ENCODE measurements at regions of chr16 and their contacts with region 1.

Region 1: DNA sequence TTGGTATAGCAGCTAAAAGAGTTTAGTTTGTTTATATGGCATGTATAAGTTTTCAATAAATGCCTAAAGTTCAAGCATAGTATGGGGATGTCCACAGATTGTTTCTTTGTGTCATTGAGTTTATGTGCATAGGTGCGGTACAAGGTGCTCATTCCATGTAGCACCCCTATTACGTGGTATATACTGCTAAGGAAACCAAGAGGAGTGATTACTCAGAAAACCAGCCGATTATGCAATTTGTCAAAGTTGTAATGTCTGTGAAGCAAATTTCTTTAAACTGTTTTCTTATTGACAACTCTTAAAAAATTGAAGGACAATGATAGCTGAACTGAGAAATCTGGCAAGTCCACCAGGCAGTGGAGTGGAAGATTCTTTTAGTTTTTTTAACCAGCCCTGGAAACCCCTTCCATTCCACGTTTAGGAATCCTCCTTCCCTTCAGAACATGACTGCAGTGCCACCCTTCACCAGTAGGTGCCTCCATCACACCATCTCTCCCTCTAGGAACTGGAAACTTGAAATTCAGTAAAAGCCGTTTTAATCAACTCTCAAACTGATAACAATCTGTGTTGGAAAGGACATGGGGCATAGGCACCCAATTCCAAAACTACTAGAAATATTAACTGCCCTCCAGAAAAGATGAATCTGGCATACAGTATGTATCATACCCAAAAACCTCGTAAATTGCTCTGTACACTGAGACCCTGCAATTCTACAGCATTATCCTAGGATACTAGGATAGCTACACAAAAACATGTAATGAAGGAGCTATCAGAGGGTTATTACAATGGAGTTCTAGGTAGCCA is 43.5 kb downstream of the REXO5 start:
- DNase-seq: peak; percentile 40 to 58 (median 56)
- H3K4me3 ChIP-seq: no peak overlapping the region
- H3K4me3 Mint-ChIP-seq: no peak overlapping the region
- H3K27ac ChIP-seq: no peak overlapping the region
- H3K27ac Mint-ChIP-seq: peak overlapping the region in 2 of 7 donors; percentile 35 to 48
- H3K4me1 ChIP-seq: peaks cover 11% of the 10 kb centered on the region
- H3K4me1 Mint-ChIP-seq: peaks cover 9 to 17% (median 11%) of the 10 kb centered on the region in 4 donors
- H3K27me3 ChIP-seq: no peaks in the 10 kb centered on the region
- H3K27me3 Mint-ChIP-seq: no peaks in the 10 kb centered on the region

Region 2: GRCh38 chr16:20430948-20431347 is 418.8 kb before region 1 on chr16:
- CTCF ChIA-PET with region 1: no interaction called
- POLR2A ChIA-PET with region 1: no interaction called
- intact Hi-C with region 1: no loop called
- DNase-seq: no peak
- H3K4me3 ChIP-seq: no peak overlapping the region
- H3K4me3 Mint-ChIP-seq: no peak overlapping the region
- H3K27ac ChIP-seq: no peak overlapping the region
- H3K27ac Mint-ChIP-seq: no peak overlapping the region
- H3K4me1 ChIP-seq: no peaks in the 10 kb centered on the region
- H3K4me1 Mint-ChIP-seq: no peaks in the 10 kb centered on the region
- H3K27me3 ChIP-seq: no peaks in the 10 kb centered on the region
- H3K27me3 Mint-ChIP-seq: peaks cover 0 to 3% of the 10 kb centered on the region in 2 donors

Region 3: DNA sequence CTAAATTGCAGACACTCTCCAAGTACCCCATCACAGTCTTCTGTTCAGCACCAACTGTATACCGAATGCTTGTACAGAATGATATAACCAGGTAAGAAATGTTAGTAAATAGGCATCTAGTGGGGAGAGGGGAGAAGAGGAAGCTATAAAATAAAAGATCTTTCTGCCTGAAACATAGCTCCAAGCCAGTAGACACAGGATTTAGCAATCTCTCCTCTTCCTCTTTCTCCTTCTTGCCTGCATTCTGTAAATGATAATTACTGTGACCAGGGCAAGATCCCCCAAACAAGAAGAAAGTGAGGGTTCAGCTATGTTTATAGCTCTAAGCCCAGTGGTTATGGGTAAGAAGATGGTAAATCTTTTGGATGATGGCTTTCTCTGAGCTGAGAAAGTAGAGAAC is 68.1 kb before region 1 on chr16:
- CTCF ChIA-PET with region 1: no interaction called
- POLR2A ChIA-PET with region 1: no interaction called
- intact Hi-C with region 1: no loop called
- DNase-seq: no peak
- H3K4me3 ChIP-seq: no peak overlapping the region
- H3K4me3 Mint-ChIP-seq: no peak overlapping the region
- H3K27ac ChIP-seq: no peak overlapping the region
- H3K27ac Mint-ChIP-seq: no peak overlapping the region
- H3K4me1 ChIP-seq: no peaks in the 10 kb centered on the region
- H3K4me1 Mint-ChIP-seq: no peaks in the 10 kb centered on the region
- H3K27me3 ChIP-seq: no peaks in the 10 kb centered on the region
- H3K27me3 Mint-ChIP-seq: no peaks in the 10 kb centered on the region

Region 4: GRCh38 chr16:20866145-20866772 is 16.5 kb after region 1 on chr16:
- CTCF ChIA-PET with region 1: interaction called, 113 read pairs
- POLR2A ChIA-PET with region 1: no interaction called
- intact Hi-C with region 1: no loop called
- DNase-seq: no peak
- H3K4me3 ChIP-seq: no peak overlapping the region
- H3K4me3 Mint-ChIP-seq: no peak overlapping the region
- H3K27ac ChIP-seq: no peak overlapping the region
- H3K27ac Mint-ChIP-seq: no peak overlapping the region
- H3K4me1 ChIP-seq: peaks cover 7% of the 10 kb centered on the region
- H3K4me1 Mint-ChIP-seq: peaks cover 10 to 17% (median 12%) of the 10 kb centered on the region in 4 donors
- H3K27me3 ChIP-seq: no peaks in the 10 kb centered on the region
- H3K27me3 Mint-ChIP-seq: no peaks in the 10 kb centered on the region

Region 5: DNA sequence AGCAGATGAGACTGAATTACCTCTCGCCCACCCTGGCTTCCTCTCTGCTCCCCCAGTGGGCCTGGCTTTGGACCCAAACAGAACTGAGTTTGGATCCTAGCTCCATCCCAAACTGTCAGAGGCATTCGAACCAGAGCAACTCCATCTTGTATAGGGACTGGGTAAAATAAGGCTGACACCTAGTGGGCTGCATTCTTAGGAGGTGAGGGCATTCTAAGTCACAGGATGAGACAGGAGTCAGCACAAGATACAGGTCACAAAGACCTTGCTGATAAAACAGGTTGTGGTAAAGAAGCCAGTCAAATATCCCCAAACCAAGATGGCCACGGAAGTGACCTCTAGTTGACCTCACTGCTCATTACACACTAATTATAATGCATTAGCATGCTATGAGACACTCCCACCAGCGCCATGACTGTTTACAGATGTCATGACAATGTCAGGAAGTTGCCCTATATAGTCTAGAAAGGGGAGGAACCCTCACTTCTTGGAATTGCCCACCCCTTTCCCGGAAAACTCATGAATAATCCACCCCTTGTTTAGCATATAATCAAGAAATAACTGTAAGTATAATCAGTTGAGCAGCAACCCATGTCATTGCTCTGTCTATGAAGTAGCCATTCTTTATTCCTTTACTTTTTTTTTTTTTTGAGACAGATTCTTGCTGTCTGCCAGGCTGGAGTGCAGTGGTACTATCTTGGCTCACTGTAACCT is 95.2 kb after region 1 on chr16:
- CTCF ChIA-PET with region 1: interaction called, 4 read pairs
- POLR2A ChIA-PET with region 1: no interaction called
- intact Hi-C with region 1: loop called (anchors 1 kb)
- DNase-seq: peak; percentile 7 to 64 (median 23)
- H3K4me3 ChIP-seq: no peak overlapping the region
- H3K4me3 Mint-ChIP-seq: no peak overlapping the region
- H3K27ac ChIP-seq: no peak overlapping the region
- H3K27ac Mint-ChIP-seq: peak overlapping the region in 1 of 7 donors; percentile 13
- H3K4me1 ChIP-seq: peaks cover 7% of the 10 kb centered on the region
- H3K4me1 Mint-ChIP-seq: peaks cover 4 to 19% (median 10%) of the 10 kb centered on the region in 4 donors
- H3K27me3 ChIP-seq: no peaks in the 10 kb centered on the region
- H3K27me3 Mint-ChIP-seq: peaks cover 0 to 1% of the 10 kb centered on the region in 2 donors

Region 6: GRCh38 chr16:21083729-21084268 is 234.0 kb after region 1 on chr16:
- CTCF ChIA-PET with region 1: interaction called, 60 read pairs
- POLR2A ChIA-PET with region 1: no interaction called
- intact Hi-C with region 1: loop called (anchors 1 kb)
- DNase-seq: peak in 4 of 5 donors; percentile 7 to 30 (median 24)
- H3K4me3 ChIP-seq: no peak overlapping the region
- H3K4me3 Mint-ChIP-seq: no peak overlapping the region
- H3K27ac ChIP-seq: no peak overlapping the region
- H3K27ac Mint-ChIP-seq: no peak overlapping the region
- H3K4me1 ChIP-seq: no peaks in the 10 kb centered on the region
- H3K4me1 Mint-ChIP-seq: no peaks in the 10 kb centered on the region
- H3K27me3 ChIP-seq: peaks cover 6% of the 10 kb centered on the region
- H3K27me3 Mint-ChIP-seq: peaks cover 8 to 10% of the 10 kb centered on the region in 2 donors

Region 7: DNA sequence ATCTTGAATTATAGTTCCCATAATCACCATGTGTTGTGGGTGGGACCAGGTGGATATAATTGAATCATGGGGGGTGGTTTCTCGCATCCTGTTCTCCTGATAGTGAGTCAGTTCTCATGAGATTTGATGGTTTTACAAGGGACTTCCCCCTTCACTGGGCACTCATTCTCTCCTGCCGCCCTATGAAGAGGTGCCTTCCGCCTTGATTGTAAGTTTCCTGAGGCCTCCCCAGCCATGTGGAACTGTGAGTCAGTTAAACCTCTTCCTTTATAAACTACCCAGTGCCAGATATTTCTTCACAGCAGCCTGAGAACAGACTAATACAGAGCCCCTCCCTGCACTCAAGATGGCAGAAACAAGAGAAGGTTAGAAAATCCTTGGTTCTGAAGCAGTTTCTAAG is 335.0 kb after region 1 on chr16:
- CTCF ChIA-PET with region 1: interaction called, 3 read pairs
- POLR2A ChIA-PET with region 1: no interaction called
- intact Hi-C with region 1: loop called (anchors 5 kb)
- DNase-seq: no peak
- H3K4me3 ChIP-seq: no peak overlapping the region
- H3K4me3 Mint-ChIP-seq: no peak overlapping the region
- H3K27ac ChIP-seq: no peak overlapping the region
- H3K27ac Mint-ChIP-seq: peak overlapping the region in 1 of 7 donors; percentile 36
- H3K4me1 ChIP-seq: peaks cover 4% of the 10 kb centered on the region
- H3K4me1 Mint-ChIP-seq: peaks cover 3 to 6% (median 4%) of the 10 kb centered on the region in 4 donors
- H3K27me3 ChIP-seq: no peaks in the 10 kb centered on the region
- H3K27me3 Mint-ChIP-seq: peaks cover 1 to 4% of the 10 kb centered on the region in 2 donors

Region 8: DNA sequence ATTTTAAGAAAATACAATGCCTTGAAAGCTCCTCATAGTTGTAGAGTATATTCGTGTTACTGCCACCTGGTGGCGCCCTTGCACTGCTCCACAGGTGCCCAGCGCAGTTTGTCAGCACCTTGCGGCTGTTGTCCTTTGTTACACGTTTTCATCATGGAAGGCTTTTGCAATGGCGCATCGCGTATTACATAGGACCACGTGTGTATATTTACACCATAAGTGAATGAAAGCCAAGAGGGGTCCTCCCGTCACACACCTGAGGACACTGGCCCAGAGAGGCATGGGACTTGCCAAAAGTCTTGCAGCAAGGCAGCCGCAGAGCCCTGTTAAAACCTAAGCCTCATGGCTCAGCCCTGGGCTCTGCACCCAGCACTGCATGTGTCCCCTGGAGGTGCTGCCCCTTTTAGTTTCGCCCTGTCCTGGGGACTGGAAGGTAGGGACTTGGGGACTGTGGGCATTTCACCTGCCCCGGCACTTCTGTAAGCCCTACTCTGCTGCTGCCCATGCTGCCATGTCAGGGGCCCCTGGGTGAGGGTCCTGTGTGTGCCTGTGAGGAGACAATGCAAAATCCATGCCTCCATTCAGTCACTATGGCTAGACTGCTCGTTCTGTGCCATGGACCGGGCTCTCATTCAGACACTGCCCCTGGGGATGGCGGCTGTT is 1471.7 kb after region 1 on chr16:
- CTCF ChIA-PET with region 1: no interaction called
- POLR2A ChIA-PET with region 1: no interaction called
- intact Hi-C with region 1: loop called (anchors 2 kb)
- DNase-seq: peak; percentile 73 to 78 (median 74)
- H3K4me3 ChIP-seq: no peak overlapping the region
- H3K4me3 Mint-ChIP-seq: peak overlapping the region in 3 of 8 donors; percentile 22 to 62 (median 26)
- H3K27ac ChIP-seq: no peak overlapping the region
- H3K27ac Mint-ChIP-seq: peak overlapping the region in 6 of 7 donors; percentile 58 to 92 (median 74)
- H3K4me1 ChIP-seq: peaks cover 5% of the 10 kb centered on the region
- H3K4me1 Mint-ChIP-seq: peaks cover 4 to 10% (median 6%) of the 10 kb centered on the region in 4 donors
- H3K27me3 ChIP-seq: no peaks in the 10 kb centered on the region
- H3K27me3 Mint-ChIP-seq: no peaks in the 10 kb centered on the region